H1 (cell line): ENCODE measurements at regions of chr3 and their contacts with region 1.

Region 1: DNA sequence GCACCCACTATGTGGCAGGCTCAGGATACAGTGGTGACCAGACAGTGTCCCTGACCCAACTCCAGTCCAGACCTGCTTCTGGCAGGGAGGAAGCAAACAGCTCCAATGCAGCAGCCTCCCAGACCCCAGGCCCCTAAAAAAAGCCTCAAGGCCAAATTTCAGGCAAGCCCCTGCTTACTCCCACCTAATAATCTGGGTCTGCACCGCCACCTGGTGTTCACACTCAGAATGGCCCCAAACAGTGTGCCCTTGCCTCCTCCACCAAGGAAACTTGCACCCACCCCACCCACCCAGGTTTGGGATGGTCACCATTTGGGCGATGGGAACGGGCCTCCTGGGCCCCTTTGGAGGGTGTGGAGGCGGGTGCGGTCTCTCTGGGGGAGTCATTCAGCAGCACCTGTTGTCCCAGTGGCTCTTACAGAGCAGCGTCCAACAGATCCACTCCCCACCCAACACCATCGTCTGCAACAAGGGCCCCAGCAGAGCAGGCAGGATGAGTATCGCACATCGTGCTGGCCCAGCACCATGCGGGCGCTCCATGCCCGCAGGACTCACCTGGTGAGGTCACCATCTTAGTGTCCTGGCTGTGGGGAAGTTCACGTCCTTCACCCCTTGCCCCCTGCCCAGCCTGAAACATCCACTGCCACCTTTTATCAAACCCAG is 17.3 kb downstream of the C3orf18 start:
- DNase-seq: peak in 1 of 2 experiments; percentile 94
- H3K4me3 ChIP-seq: no peak overlapping the region
- H3K27ac ChIP-seq: no peak overlapping the region
- H3K4me1 ChIP-seq: peaks cover 0 to 6% (median 2%) of the 10 kb centered on the region in 4 experiments; a peak in 3 of 7 replicates
- H3K27me3 ChIP-seq: peaks cover 0 to 3% (median 0%) of the 10 kb centered on the region in 4 experiments; a peak in 3 of 7 replicates
- CTCF ChIP-seq: peak in 2 of 3 experiments; percentile 81 to 88; a peak in 3 of 4 replicates
- EP300 ChIP-seq: no peak
- POLR2A ChIP-seq: no peak
- RAD21 ChIP-seq: peak; percentile 91

Region 2: DNA sequence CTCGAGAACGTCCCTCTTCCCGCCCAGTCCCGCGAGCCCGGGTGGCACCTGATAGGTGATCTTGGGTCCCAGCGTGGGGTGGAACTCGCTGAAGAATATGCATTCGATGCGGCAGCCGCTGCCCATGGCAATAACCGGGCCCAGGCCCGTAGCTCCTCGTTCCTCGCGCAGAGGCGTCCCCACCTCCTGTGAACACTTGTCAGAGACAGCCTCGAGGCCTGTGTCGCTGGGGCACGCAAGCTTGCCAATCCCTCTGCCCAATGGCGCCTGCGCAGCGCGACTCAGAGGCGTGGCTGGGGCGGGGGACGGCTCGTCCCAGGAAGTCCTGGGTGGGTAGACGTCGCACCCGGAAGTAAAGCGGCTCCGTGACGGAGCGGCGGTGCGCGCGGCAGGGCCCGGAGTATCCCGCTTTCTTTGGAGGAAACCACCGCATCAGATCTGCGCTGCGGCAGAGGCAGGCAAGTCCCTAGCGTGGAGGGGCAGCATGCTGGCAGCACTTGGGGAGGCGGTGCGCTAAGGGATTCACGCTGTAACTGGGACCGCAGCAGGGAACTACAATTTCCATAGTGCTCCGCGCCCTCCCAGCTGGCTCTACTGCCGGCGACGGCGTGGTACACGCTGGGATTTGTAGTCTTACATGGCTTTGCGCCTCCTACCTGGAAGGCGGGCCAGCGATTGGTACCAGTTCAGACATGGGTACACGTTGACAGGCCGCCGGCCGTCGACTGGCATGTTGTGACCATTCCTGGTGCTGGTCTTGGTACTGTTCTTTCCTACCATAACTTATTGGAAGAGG is 199.5 kb before region 1 on chr3 and contains the starts of genes CYB561D2 and NPRL2:
- CTCF ChIA-PET with region 1: interaction called, 84 read pairs
- POLR2A ChIA-PET with region 1: interaction called, 3 read pairs
- DNase-seq: peak; percentile 72 to 93
- H3K4me3 ChIP-seq: peak within 1 kb of the TSS; percentile 79 to 87 (median 82)
- H3K27ac ChIP-seq: no peak within 1 kb of the TSS
- H3K4me1 ChIP-seq: peaks cover 0 to 11% (median 8%) of the 10 kb centered on the region in 4 experiments; a peak in 5 of 7 replicates
- H3K27me3 ChIP-seq: peaks cover 0 to 4% (median 4%) of the 10 kb centered on the region in 4 experiments; a peak in 4 of 7 replicates
- CTCF ChIP-seq: no peak
- EP300 ChIP-seq: no peak
- POLR2A ChIP-seq: peak in 1 of 2 experiments; percentile 59; a peak in 2 of 3 replicates
- RAD21 ChIP-seq: no peak
- total RNA-seq, gene CYB561D2: 9.8 and 9.9 TPM in 2 replicates
- total RNA-seq, gene NPRL2: 25.0 and 28.4 TPM in 2 replicates

Region 3: GRCh38 chr3:50418850-50419249 is 131.4 kb before region 1 on chr3:
- CTCF ChIA-PET with region 1: interaction called, 473 read pairs
- POLR2A ChIA-PET with region 1: no interaction called
- DNase-seq: no peak
- H3K4me3 ChIP-seq: no peak overlapping the region
- H3K27ac ChIP-seq: no peak overlapping the region
- H3K4me1 ChIP-seq: peaks cover 0 to 2% (median 0%) of the 10 kb centered on the region in 4 experiments; a peak in 1 of 7 replicates
- H3K27me3 ChIP-seq: no peaks in the 10 kb centered on the region; a peak in 1 of 7 replicates
- CTCF ChIP-seq: no peak
- EP300 ChIP-seq: no peak
- POLR2A ChIP-seq: no peak
- RAD21 ChIP-seq: no peak

Region 4: GRCh38 chr3:50466177-50466576 is 84.0 kb before region 1 on chr3:
- CTCF ChIA-PET with region 1: interaction called, 15 read pairs
- POLR2A ChIA-PET with region 1: no interaction called
- DNase-seq: no peak
- H3K4me3 ChIP-seq: no peak overlapping the region
- H3K27ac ChIP-seq: no peak overlapping the region
- H3K4me1 ChIP-seq: peaks cover 0 to 4% (median 1%) of the 10 kb centered on the region in 4 experiments; a peak in 3 of 7 replicates
- H3K27me3 ChIP-seq: peaks cover 0 to 3% (median 0%) of the 10 kb centered on the region in 4 experiments; a peak in 1 of 7 replicates
- CTCF ChIP-seq: peak in 1 of 3 experiments; percentile 9; a peak in 1 of 4 replicates
- EP300 ChIP-seq: no peak
- POLR2A ChIP-seq: no peak
- RAD21 ChIP-seq: no peak

Region 5: DNA sequence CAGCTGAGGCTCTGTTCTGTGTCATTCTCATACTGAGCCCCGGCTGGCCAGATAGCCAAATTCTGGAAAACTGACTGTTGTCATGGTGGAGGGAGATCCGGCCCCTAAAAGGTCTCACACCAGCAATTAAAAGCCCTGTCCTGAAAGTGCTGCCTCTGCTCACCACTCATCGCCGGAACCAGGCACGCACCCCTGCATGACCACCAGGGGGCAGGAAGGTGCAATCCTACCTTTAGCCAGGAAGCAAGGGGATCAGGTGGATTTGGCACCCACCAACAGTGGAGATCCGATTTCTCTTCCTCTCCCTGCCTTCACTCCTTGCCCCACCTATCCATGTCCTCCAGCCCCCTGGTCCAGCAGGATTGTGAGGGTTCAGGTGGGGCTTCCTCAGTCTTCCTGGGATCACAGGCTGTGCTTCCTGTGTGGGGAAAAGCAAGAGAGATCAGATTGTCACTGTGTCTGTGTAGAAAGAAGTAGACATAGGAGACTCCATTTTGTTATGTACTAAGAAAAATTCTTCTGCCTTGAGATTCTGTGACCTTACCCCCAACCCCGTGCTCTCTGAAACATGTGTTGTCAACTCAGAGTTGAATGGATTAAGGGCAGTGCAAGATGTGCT is 30.6 kb before region 1 on chr3:
- CTCF ChIA-PET with region 1: interaction called, 129 read pairs
- POLR2A ChIA-PET with region 1: interaction called, 3 read pairs
- DNase-seq: peak; percentile 81 to 95
- H3K4me3 ChIP-seq: no peak overlapping the region
- H3K27ac ChIP-seq: no peak overlapping the region
- H3K4me1 ChIP-seq: peaks cover 3 to 55% (median 42%) of the 10 kb centered on the region in 4 experiments
- H3K27me3 ChIP-seq: no peaks in the 10 kb centered on the region
- CTCF ChIP-seq: peak in 2 of 3 experiments; percentile 95 to 99; a peak in 3 of 4 replicates
- EP300 ChIP-seq: no peak
- POLR2A ChIP-seq: no peak
- RAD21 ChIP-seq: peak; percentile 80 to 86

Region 6: GRCh38 chr3:50568947-50569749 is 18.9 kb after region 1 on chr3 and contains the start of gene HEMK1:
- CTCF ChIA-PET with region 1: interaction called, 43 read pairs
- POLR2A ChIA-PET with region 1: interaction called, 3 read pairs
- DNase-seq: peak; percentile 79 to 99
- H3K4me3 ChIP-seq: peak within 1 kb of the TSS; percentile 68 to 98 (median 77)
- H3K27ac ChIP-seq: peak within 1 kb of the TSS; percentile 65
- H3K4me1 ChIP-seq: peaks cover 0 to 6% (median 4%) of the 10 kb centered on the region in 4 experiments; a peak in 5 of 7 replicates
- H3K27me3 ChIP-seq: peaks cover 0 to 13% (median 5%) of the 10 kb centered on the region in 4 experiments; a peak in 4 of 7 replicates
- CTCF ChIP-seq: no peak
- EP300 ChIP-seq: no peak
- POLR2A ChIP-seq: peak in 1 of 2 experiments; percentile 25; a peak in 2 of 3 replicates
- RAD21 ChIP-seq: no peak
- total RNA-seq, gene HEMK1: 9.6 and 9.7 TPM in 2 replicates

Region 7: DNA sequence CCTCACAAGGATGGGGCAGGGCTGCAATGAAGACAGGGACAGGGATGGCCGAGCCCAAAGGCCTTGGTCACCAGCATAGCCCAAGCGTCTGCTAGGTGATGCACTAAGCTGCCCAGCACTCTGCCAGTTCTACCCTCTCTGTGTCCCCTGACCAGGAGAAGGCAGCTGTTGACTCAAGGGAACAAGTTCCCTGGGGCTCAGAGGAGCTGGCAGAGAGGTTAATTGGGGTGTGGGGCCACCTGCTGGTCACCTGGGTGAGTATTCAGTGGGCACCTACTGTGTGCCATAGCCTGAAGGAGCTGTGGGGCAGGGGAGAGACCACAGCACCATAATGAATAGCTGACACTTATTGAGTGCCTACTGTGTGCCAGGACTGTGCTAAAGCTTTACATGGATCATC is 102.5 kb after region 1 on chr3:
- CTCF ChIA-PET with region 1: no interaction called
- POLR2A ChIA-PET with region 1: no interaction called
- DNase-seq: peak; percentile 46 to 76
- H3K4me3 ChIP-seq: no peak overlapping the region
- H3K27ac ChIP-seq: no peak overlapping the region
- H3K4me1 ChIP-seq: peaks cover 0 to 18% (median 6%) of the 10 kb centered on the region in 4 experiments; a peak in 6 of 7 replicates
- H3K27me3 ChIP-seq: no peaks in the 10 kb centered on the region
- CTCF ChIP-seq: peak in 2 of 3 experiments; percentile 65 to 70; a peak in 3 of 4 replicates
- EP300 ChIP-seq: no peak
- POLR2A ChIP-seq: no peak
- RAD21 ChIP-seq: peak; percentile 80 to 89

Region 8: GRCh38 chr3:50708620-50709019 is 158.4 kb after region 1 on chr3:
- CTCF ChIA-PET with region 1: no interaction called
- POLR2A ChIA-PET with region 1: no interaction called
- DNase-seq: no peak
- H3K4me3 ChIP-seq: no peak overlapping the region
- H3K27ac ChIP-seq: no peak overlapping the region
- H3K4me1 ChIP-seq: no peaks in the 10 kb centered on the region; a peak in 1 of 7 replicates
- H3K27me3 ChIP-seq: no peaks in the 10 kb centered on the region
- CTCF ChIP-seq: no peak
- EP300 ChIP-seq: no peak
- POLR2A ChIP-seq: no peak
- RAD21 ChIP-seq: no peak

Region 9: DNA sequence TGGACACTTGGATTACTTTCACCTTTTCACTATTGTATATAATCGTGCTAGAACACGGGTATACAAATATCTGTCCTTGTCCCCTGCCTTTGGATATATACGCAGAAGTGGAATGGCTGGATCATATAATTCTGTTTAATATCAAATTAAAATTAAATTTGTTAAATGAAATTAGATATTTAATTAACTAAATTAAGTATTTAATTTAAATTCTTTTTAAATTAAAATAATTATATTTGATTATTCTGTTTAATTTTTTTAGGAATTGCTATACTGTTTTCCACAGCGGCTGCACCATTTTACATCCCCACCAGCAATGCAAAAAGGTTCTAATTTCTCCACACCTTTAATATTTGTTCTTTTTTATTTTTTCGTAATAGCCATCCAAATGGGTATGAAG is 208.8 kb after region 1 on chr3:
- CTCF ChIA-PET with region 1: no interaction called
- POLR2A ChIA-PET with region 1: no interaction called
- DNase-seq: no peak
- H3K4me3 ChIP-seq: no peak overlapping the region
- H3K27ac ChIP-seq: no peak overlapping the region
- H3K4me1 ChIP-seq: no peaks in the 10 kb centered on the region
- H3K27me3 ChIP-seq: no peaks in the 10 kb centered on the region
- CTCF ChIP-seq: no peak
- EP300 ChIP-seq: no peak
- POLR2A ChIP-seq: no peak
- RAD21 ChIP-seq: no peak

Region 10: GRCh38 chr3:50792568-50792967 is 242.4 kb after region 1 on chr3:
- CTCF ChIA-PET with region 1: no interaction called
- POLR2A ChIA-PET with region 1: no interaction called
- DNase-seq: no peak
- H3K4me3 ChIP-seq: no peak overlapping the region
- H3K27ac ChIP-seq: no peak overlapping the region
- H3K4me1 ChIP-seq: peaks cover 0 to 9% (median 4%) of the 10 kb centered on the region in 4 experiments; a peak in 6 of 7 replicates
- H3K27me3 ChIP-seq: no peaks in the 10 kb centered on the region
- CTCF ChIP-seq: no peak
- EP300 ChIP-seq: no peak
- POLR2A ChIP-seq: no peak
- RAD21 ChIP-seq: no peak